ENCODE measurements at regions of chr14 and their contacts with region 1.

Region 1: GRCh38 chr14:56764338-56764737 is 45.9 kb downstream of the OTX2 start:
- DNase-seq: no peak
- H3K4me3 ChIP-seq: no peak overlapping the region
- H3K27ac ChIP-seq: no peak overlapping the region
- H3K4me1 ChIP-seq: no peaks in the 10 kb centered on the region
- H3K27me3 ChIP-seq: no peaks in the 10 kb centered on the region
- CTCF ChIP-seq: no peak
- POLR2A ChIP-seq: no peak

Region 2: DNA sequence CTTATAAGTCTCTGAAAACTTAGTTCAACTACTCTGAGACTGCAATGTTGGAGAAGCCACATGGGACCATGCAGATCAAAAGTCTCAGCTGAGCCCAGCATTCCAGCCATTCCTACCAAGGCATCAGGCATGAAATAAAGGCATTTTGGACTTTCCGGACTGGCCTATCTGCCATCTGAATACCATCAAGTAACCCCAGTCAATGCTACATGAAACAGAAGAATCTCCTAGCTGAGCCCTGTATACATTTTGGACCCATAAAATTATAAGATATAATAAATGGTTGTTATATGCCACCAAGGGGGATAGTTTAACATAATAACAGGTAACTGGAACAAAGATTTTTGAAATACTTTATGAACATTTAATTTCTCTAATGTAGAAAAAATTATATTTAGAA is 194.0 kb before region 1 on chr14:
- intact Hi-C with region 1: no loop called
- DNase-seq: no peak
- H3K4me3 ChIP-seq: no peak overlapping the region
- H3K27ac ChIP-seq: no peak overlapping the region
- H3K4me1 ChIP-seq: no peaks in the 10 kb centered on the region
- H3K27me3 ChIP-seq: no peaks in the 10 kb centered on the region
- CTCF ChIP-seq: no peak
- POLR2A ChIP-seq: no peak

Region 3: DNA sequence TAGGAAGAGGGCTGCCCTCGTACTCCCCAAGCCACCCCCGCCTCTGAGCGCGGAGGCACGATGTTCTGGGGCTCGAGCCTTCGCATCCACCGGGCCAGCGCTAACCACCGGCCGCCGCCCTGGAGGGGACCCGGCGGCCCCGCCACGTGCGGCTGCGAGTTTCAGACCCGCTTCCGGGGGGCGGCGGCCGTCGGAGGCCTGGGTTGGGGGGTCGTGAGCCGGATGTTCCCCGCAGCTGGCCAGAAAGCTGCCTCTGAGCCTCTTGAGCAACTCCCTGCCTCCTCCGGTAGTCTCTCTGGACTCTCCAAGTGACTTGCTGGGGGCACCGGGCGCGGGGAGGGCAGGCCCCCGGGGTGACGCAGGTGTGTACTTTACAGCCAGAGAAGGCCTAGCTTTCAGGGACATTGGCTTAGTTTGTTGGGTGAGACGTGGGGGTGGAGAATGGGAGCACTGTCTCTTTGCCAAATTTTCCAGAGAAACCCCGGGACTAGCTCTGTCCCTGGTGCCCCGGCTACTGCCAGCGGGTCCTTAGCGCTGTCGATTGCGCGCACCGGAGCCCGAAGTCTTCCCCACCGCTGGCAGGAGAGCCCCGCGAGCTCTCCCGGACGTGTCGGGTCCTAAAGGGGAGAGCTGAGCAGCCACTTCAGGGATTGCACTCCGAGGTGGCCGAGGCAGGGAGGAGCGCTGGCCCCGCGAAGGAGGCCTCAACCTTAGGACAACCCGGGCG is 30.4 kb after region 1 on chr14:
- intact Hi-C with region 1: loop called (anchors 2 kb)
- DNase-seq: no peak
- H3K4me3 ChIP-seq: peak overlapping the region in 1 of 3 donors; percentile 19
- H3K27ac ChIP-seq: no peak overlapping the region
- H3K4me1 ChIP-seq: no peaks in the 10 kb centered on the region
- H3K27me3 ChIP-seq: peaks cover 6 to 85% of the 10 kb centered on the region in 2 donors
- CTCF ChIP-seq: no peak
- POLR2A ChIP-seq: no peak